HCT116 (cell line): ENCODE measurements at regions of chr4 and their contacts with region 1.

Region 1: GRCh38 chr4:133483600-133484246 is 334.6 kb downstream of the PCDH10 start:
- DNase-seq: peak; percentile 34
- ATAC-seq: peak; percentile 72
- H3K4me3 ChIP-seq: no peak overlapping the region
- H3K27ac ChIP-seq: no peak overlapping the region
- H3K4me1 ChIP-seq: no peaks in the 10 kb centered on the region
- H3K27me3 ChIP-seq: no peaks in the 10 kb centered on the region
- CTCF ChIP-seq: peak; percentile 32 to 48 (median 39); a peak in 4 of 6 replicates
- POLR2A ChIP-seq: no peak
- RAD21 ChIP-seq: peak; percentile 47

Region 2: GRCh38 chr4:132542228-132542627 is 941.5 kb before region 1 on chr4:
- CTCF ChIA-PET with region 1: no interaction called
- POLR2A ChIA-PET with region 1: no interaction called
- RAD21 ChIA-PET with region 1: no interaction called
- intact Hi-C with region 1: no loop called
- DNase-seq: no peak
- ATAC-seq: no peak
- H3K4me3 ChIP-seq: no peak overlapping the region
- H3K27ac ChIP-seq: no peak overlapping the region
- H3K4me1 ChIP-seq: no peaks in the 10 kb centered on the region
- H3K27me3 ChIP-seq: no peaks in the 10 kb centered on the region
- CTCF ChIP-seq: no peak
- POLR2A ChIP-seq: no peak
- RAD21 ChIP-seq: no peak

Region 3: GRCh38 chr4:133148690-133149363 is 334.9 kb before region 1 on chr4 and contains the start of gene PCDH10:
- CTCF ChIA-PET with region 1: no interaction called
- POLR2A ChIA-PET with region 1: no interaction called
- RAD21 ChIA-PET with region 1: no interaction called
- intact Hi-C with region 1: loop called (anchors 5 kb)
- DNase-seq: no peak
- ATAC-seq: no peak
- H3K4me3 ChIP-seq: no peak within 1 kb of the TSS
- H3K27ac ChIP-seq: no peak within 1 kb of the TSS
- H3K4me1 ChIP-seq: no peaks in the 10 kb centered on the region
- H3K27me3 ChIP-seq: no peaks in the 10 kb centered on the region
- CTCF ChIP-seq: no peak
- POLR2A ChIP-seq: no peak
- RAD21 ChIP-seq: no peak
- total RNA-seq, gene PCDH10: not detected

Region 4: GRCh38 chr4:133320576-133321170 is 163.1 kb before region 1 on chr4:
- CTCF ChIA-PET with region 1: interaction called, 3 read pairs
- POLR2A ChIA-PET with region 1: no interaction called
- RAD21 ChIA-PET with region 1: interaction called in 1 of 2 experiments, 3 read pairs
- intact Hi-C with region 1: loop called (anchors 5 kb)
- DNase-seq: peak; percentile 33
- ATAC-seq: peak; percentile 85
- H3K4me3 ChIP-seq: no peak overlapping the region
- H3K27ac ChIP-seq: no peak overlapping the region
- H3K4me1 ChIP-seq: no peaks in the 10 kb centered on the region
- H3K27me3 ChIP-seq: no peaks in the 10 kb centered on the region
- CTCF ChIP-seq: peak; percentile 48 to 73 (median 69); a peak in 5 of 6 replicates
- POLR2A ChIP-seq: no peak
- RAD21 ChIP-seq: peak; percentile 66